Head of caudate nucleus (tissue), 42 donors: ENCODE measurements at regions of chr19 and their contacts with region 1.

Region 1: GRCh38 chr19:1652471-1653299 is at the start of gene TCF3:
- DNase-seq: peak; percentile 96 to 100 (median 99)

Region 2: GRCh38 chr19:1592755-1593500 is 59.8 kb before region 1 on chr19 and contains the start of gene MBD3:
- intact Hi-C with region 1: loop called (anchors 2 kb)
- DNase-seq: peak; percentile 86 to 97 (median 94)

Region 3: GRCh38 chr19:1605236-1606137 is 47.2 kb before region 1 on chr19 and contains the start of gene UQCR11:
- intact Hi-C with region 1: loop called (anchors 5 kb)
- DNase-seq: peak; percentile 93 to 99 (median 97)